ENCODE measurements at regions of chr7 and their contacts with region 1.

Region 1: GRCh38 chr7:39453743-39454355 is 112.4 kb upstream of the YAE1 start:
- DNase-seq: no peak
- H3K4me3 ChIP-seq: no peak overlapping the region
- H3K27ac ChIP-seq: no peak overlapping the region
- H3K4me1 ChIP-seq: no peaks in the 10 kb centered on the region
- H3K27me3 ChIP-seq: no peaks in the 10 kb centered on the region
- CTCF ChIP-seq: no peak
- POLR2A ChIP-seq: no peak

Region 2: DNA sequence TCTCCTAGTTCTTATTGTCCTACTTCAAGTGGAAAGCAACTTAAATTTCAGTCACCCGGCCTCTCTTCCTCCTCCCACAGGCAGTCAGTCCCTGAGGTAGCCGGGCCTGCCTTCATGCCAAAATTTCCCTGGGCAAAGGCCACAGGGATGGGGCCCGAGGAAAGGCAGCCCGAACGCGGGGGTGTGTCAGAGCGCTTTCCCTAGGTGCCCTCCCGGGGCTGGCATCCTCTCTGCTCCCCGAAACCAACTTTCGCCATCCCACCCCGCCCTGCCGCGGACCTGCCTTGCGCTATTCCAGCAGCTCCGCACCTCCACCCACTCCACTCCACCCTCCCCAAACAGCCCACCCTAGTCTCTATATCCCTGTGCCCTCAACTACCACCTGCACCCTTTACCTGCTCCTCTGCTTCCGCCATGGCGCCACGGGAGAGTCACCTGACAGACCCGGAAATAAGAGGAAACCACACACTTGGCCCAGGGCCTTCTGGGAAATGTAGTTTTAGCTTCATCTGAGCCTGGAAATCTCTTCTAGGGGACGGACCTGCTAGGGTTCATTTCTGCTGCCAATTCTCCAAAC is 545.0 kb before region 1 on chr7 and contains the start of gene VPS41:
- intact Hi-C with region 1: no loop called
- DNase-seq: no peak
- H3K4me3 ChIP-seq: peak within 1 kb of the TSS; percentile 70 to 77
- H3K27ac ChIP-seq: peak within 1 kb of the TSS; percentile 51
- H3K4me1 ChIP-seq: peaks cover 11% of the 10 kb centered on the region
- H3K27me3 ChIP-seq: no peaks in the 10 kb centered on the region
- CTCF ChIP-seq: no peak
- POLR2A ChIP-seq: no peak
- total RNA-seq, gene VPS41: 46.7 TPM

Region 3: GRCh38 chr7:38962028-38962427 is 491.8 kb before region 1 on chr7:
- intact Hi-C with region 1: loop called (anchors 10 kb)
- DNase-seq: no peak
- H3K4me3 ChIP-seq: no peak overlapping the region
- H3K27ac ChIP-seq: no peak overlapping the region
- H3K4me1 ChIP-seq: no peaks in the 10 kb centered on the region
- H3K27me3 ChIP-seq: no peaks in the 10 kb centered on the region
- CTCF ChIP-seq: no peak
- POLR2A ChIP-seq: no peak

Region 4: GRCh38 chr7:39527296-39527695 is 73.4 kb after region 1 on chr7:
- intact Hi-C with region 1: no loop called
- DNase-seq: no peak
- H3K4me3 ChIP-seq: no peak overlapping the region
- H3K27ac ChIP-seq: no peak overlapping the region
- H3K4me1 ChIP-seq: no peaks in the 10 kb centered on the region
- H3K27me3 ChIP-seq: no peaks in the 10 kb centered on the region
- CTCF ChIP-seq: no peak
- POLR2A ChIP-seq: no peak

Measured in vagina (tissue), 2 donors.